ENCODE measurements at regions of chr9 and their contacts with region 1.

Region 1: GRCh38 chr9:136902259-136902821 is 16.0 kb downstream of the TRAF2 start:
- DNase-seq: peak; percentile 81
- H3K4me3 Mint-ChIP-seq: peak overlapping the region; percentile 70
- H3K27ac Mint-ChIP-seq: peak overlapping the region; percentile 95
- H3K4me1 Mint-ChIP-seq: peaks cover 47% of the 10 kb centered on the region
- H3K27me3 Mint-ChIP-seq: no peaks in the 10 kb centered on the region

Region 2: GRCh38 chr9:136865735-136866103 is 36.6 kb before region 1 on chr9:
- intact Hi-C with region 1: loop called (anchors 1 kb)
- DNase-seq: no peak
- H3K4me3 Mint-ChIP-seq: peak overlapping the region; percentile 86
- H3K27ac Mint-ChIP-seq: peak overlapping the region; percentile 63
- H3K4me1 Mint-ChIP-seq: peaks cover 9% of the 10 kb centered on the region
- H3K27me3 Mint-ChIP-seq: no peaks in the 10 kb centered on the region

Region 3: DNA sequence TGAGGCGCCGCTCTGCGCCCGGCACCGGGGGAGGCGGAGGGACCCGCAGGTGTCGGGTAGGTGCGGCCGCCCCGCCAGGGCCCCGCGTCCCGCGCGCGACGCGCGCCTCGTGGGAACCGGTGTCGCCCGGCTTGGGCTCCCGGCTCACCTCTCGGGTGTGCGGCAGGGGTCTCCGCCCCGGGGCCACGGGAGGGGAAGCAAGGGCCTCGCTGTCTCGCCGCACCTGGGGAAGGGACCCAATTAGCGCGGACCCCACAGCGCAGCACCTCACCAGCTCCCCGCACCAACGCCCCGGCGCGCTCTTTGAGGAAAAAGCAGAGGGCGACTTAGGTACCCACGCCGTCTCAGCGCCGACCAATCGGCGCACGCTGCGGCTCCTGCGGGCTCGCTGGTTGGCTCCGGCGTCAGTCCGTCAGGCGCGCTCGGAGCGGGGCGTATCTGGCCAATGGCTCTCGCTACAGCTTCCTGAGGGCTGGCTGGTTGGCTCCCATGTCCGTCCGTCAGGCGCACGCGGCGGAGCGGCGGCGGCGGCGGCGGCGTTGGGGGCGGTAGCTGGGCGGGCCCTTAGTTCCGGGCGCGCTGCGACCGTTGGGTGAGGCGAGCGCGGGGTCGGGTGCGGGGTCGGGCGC is 16.3 kb before region 1 on chr9 and contains the start of gene TRAF2:
- intact Hi-C with region 1: loop called (anchors 1 kb)
- DNase-seq: peak; percentile 99
- H3K4me3 Mint-ChIP-seq: peak within 1 kb of the TSS; percentile 97
- H3K27ac Mint-ChIP-seq: peak within 1 kb of the TSS; percentile 87
- H3K4me1 Mint-ChIP-seq: peaks cover 30% of the 10 kb centered on the region
- H3K27me3 Mint-ChIP-seq: no peaks in the 10 kb centered on the region
- total RNA-seq, gene TRAF2: 59.5 and 60.4 TPM in 2 replicates

Region 4: GRCh38 chr9:136944519-136945279 is 42.4 kb after region 1 on chr9 and contains the starts of genes C8G and FBXW5:
- intact Hi-C with region 1: loop called (anchors 2 kb)
- DNase-seq: peak; percentile 95
- H3K4me3 Mint-ChIP-seq: peak within 1 kb of the TSS; percentile 79
- H3K27ac Mint-ChIP-seq: peak within 1 kb of the TSS; percentile 82
- H3K4me1 Mint-ChIP-seq: peaks cover 3% of the 10 kb centered on the region
- H3K27me3 Mint-ChIP-seq: no peaks in the 10 kb centered on the region
- total RNA-seq, gene C8G: 0.76 and 0.89 TPM in 2 replicates
- total RNA-seq, gene FBXW5: 94.4 and 95.9 TPM in 2 replicates

Region 5: DNA sequence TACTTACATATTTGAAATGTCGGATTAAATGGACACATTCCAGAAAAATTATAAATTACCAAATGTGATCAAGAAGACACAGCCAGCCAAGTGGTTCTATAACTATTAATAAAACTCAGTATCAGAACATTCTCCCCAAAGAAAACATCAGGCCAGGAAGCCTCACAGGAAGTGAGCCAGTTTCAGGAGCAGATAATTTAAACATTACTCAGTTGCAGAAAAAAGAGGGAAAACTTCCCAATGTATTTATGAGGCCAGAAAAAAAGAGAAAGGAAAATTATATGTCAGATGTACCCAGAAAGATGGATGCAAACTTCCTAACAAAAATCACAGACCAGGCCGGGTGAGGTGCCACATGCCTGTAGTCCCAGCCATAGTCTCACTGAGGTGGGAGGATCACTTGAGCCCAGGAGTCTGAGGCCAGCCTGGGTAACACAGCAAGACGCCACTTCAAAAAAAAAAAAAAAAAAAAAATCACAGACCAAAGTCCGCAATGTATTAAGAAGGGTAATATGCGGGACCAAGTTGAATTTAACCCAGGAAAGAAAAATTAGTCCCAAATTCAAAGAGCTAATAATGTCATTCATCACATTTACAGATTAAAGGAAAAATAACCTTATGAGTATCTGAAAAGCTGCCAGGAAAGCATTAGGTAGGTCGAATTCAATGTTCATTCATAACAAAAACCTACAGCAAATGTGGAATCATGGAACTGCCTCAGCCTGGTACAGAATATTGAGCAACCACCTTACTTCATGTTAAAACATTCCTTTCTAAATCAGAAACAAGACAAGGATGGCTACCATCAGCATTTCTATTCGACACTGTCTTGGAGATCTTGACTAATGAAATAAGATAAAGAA is 436.9 kb after region 1 on chr9:
- intact Hi-C with region 1: no loop called
- DNase-seq: no peak
- H3K4me3 Mint-ChIP-seq: no peak overlapping the region
- H3K27ac Mint-ChIP-seq: no peak overlapping the region
- H3K4me1 Mint-ChIP-seq: peaks cover 1% of the 10 kb centered on the region
- H3K27me3 Mint-ChIP-seq: no peaks in the 10 kb centered on the region